Posterior cingulate gyrus (tissue), 11 donors: ENCODE measurements at regions of chr5 and their contacts with region 1.

Region 1: DNA sequence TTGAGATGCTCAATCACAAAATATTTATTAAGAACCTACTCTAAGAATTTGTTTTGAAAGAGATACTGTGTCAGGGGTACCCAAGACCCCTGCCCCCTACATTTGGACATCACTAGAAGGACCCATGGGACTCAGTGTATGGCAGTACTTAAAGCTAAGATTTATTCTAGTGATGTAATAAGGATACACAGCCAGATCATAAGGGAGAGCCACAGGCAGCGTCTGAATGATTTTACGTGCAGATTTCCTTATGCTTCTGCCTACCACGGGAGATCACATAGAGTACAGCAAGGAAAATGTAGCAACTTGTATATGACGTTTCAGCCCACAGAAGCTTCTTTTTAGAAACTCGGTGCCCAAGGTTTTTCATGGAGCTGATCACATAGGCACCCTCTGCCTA is 172.9 kb downstream of the DEPDC1B start:
- DNase-seq: no peak

Region 2: DNA sequence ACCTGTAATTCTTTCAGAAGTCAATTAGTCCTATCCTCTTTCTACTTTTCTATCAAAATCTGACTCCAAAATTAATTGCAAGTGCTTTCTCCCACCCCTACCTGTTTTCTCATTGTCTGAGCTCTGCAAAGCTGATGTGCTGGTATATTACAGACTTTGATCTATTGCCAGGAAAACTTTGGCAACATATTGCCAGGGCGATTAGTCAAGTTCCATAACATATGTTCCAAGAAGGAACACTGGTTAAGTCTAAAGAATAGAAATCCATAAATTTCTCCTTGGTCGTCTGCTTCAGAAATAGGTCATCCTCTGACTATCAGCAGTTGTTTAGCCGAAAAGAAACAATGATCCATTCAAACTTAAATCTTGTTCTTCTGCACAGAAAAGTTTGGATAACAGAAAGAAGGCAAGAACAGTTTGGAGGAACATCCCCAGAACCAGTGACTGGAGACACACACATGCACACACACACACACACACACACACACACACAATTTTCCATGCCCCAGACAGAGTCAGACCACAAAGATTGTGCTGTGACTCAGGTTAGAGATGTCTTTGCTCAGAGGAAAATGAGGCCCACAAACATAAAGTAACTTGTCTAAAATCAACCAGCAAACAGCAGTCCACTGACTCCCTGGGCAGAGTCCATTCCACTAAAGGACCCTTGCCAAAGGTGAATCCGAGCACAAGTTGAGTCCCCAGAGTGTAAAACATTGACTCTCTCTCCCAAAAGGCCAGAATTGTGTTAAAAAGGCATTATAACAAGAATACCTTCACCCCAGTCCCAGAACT is 29.2 kb before region 1 on chr5:
- intact Hi-C with region 1: loop called (anchors 1 kb)
- DNase-seq: no peak